Mucosa of descending colon (tissue), 3 donors: ENCODE measurements at regions of chr7 and their contacts with region 1.

Region 1: GRCh38 chr7:48109848-48110663 is 21.0 kb downstream of the UPP1 start:
- DNase-seq: peak; percentile 83 to 95 (median 92)
- ATAC-seq: peak; percentile 94
- H3K4me3 ChIP-seq: no peak overlapping the region
- H3K4me1 ChIP-seq: no peaks in the 10 kb centered on the region
- CTCF ChIP-seq: peak; percentile 93

Region 2: GRCh38 chr7:47610506-47611044 is 499.5 kb before region 1 on chr7:
- intact Hi-C with region 1: no loop called
- DNase-seq: peak in 1 of 3 donors; percentile 32
- ATAC-seq: peak; percentile 57
- H3K4me3 ChIP-seq: no peak overlapping the region
- H3K4me1 ChIP-seq: peaks cover 11% of the 10 kb centered on the region
- CTCF ChIP-seq: no peak

Region 3: GRCh38 chr7:47647181-47647917 is 462.7 kb before region 1 on chr7:
- intact Hi-C with region 1: no loop called
- DNase-seq: no peak
- ATAC-seq: peak; percentile 69
- H3K4me3 ChIP-seq: no peak overlapping the region
- H3K4me1 ChIP-seq: no peaks in the 10 kb centered on the region
- CTCF ChIP-seq: no peak

Region 4: DNA sequence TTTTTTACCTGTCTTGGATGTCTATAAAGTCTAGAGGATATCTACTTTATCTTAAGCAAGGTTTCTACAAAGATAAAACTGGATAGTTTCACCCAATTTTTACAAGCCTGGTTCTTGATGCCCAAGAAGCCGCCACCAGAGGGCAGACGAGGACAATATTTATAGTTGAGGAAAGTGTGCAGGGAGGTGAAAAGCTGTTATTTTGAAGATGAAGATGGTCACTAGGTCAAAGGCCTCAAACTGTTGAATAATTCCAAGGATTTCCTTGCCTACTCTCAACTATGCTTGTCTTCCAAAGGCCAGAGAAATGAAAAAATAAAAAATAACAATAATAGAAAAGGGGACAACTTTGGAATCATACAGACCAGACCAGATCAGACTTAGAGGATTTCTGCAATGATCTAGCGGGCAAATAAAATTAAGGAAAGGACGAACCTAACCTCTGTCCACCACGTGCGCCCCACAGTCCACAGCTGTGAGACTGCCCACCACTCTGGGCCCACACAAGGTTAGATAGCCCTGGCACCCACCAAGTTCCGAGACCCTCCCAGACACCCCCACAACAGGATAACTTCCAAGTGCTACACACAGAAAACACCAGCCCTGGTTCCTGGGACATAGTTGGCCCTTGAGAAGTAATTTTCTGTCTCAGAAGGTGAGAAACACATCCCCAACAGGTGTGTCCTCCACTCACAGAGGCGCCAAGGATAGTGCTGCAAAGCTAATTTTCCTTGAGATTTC is 164.6 kb before region 1 on chr7:
- intact Hi-C with region 1: loop called (anchors 2 to 5 kb)
- DNase-seq: peak in 2 of 3 donors; percentile 83 to 98
- ATAC-seq: no peak
- H3K4me3 ChIP-seq: no peak overlapping the region
- H3K4me1 ChIP-seq: peaks cover 11% of the 10 kb centered on the region
- CTCF ChIP-seq: peak; percentile 64

Region 5: GRCh38 chr7:47991741-47992311 is 118.2 kb before region 1 on chr7:
- intact Hi-C with region 1: loop called in 1 of 2 experiments (anchors 10 kb)
- DNase-seq: peak; percentile 90 to 94 (median 93)
- ATAC-seq: peak; percentile 99
- H3K4me3 ChIP-seq: no peak overlapping the region
- H3K4me1 ChIP-seq: no peaks in the 10 kb centered on the region
- CTCF ChIP-seq: peak; percentile 4